HEK293 (cell line): ENCODE measurements at regions of chr21 and their contacts with region 1.

Region 1: DNA sequence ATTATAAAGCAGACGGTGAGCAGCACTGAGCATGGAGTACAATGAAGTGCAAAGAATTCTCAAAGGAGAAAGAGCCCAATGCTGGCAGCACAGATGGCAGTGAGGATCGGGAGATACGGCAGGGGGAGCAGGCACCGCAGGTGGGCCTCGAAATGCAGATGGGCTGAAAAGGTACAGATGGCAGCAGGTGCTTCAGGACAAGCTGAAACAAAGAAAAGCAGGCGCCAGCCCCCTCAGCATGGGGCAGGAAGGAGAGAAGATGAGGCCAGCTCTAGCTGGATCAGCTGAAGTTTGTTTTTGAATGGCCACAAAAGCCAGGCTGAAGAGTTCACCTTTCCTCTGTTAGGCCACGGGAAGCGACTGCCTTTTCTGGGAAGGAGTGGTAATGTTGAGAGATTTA is 7.7 kb downstream of the CFAP298 start:
- H3K4me3 ChIP-seq: no peak overlapping the region
- H3K27ac ChIP-seq: no peak overlapping the region
- H3K4me1 ChIP-seq: no peaks in the 10 kb centered on the region
- CTCF ChIP-seq: no peak

Region 2: GRCh38 chr21:32403201-32403777 is 201.2 kb before region 1 on chr21:
- CTCF ChIA-PET with region 1: interaction called, 209 read pairs
- POLR2A ChIA-PET with region 1: interaction called, 10 read pairs
- H3K4me3 ChIP-seq: no peak overlapping the region
- H3K27ac ChIP-seq: no peak overlapping the region
- H3K4me1 ChIP-seq: no peaks in the 10 kb centered on the region
- CTCF ChIP-seq: peak; percentile 70

Region 3: GRCh38 chr21:32412162-32413014 is 192.1 kb before region 1 on chr21 and contains the start of gene EVA1C:
- CTCF ChIA-PET with region 1: interaction called, 209 read pairs
- POLR2A ChIA-PET with region 1: interaction called, 10 read pairs
- H3K4me3 ChIP-seq: peak within 1 kb of the TSS; percentile 39
- H3K27ac ChIP-seq: peak within 1 kb of the TSS; percentile 67; the same call in 1 of the 2 replicates
- H3K4me1 ChIP-seq: peaks cover 13% of the 10 kb centered on the region
- CTCF ChIP-seq: no peak

Region 4: DNA sequence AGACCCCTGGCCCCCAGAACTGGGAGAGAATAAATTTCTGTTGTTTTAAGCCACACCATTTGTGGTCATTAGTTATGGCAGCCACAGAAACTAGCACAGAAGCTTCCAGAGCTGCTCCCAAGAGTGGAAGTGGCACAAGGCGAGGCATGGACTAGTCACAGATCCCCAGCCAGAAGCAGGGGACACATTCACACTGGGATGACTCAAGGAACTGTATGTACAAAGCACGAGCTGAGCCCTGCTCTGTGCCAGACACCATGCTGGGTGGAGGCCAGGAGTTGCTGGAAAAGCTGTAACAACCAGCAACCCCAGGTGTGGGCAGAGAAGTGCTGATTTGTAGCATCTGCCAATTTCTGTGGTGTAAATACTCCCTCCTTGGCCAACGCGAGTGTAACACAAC is 74.8 kb before region 1 on chr21:
- CTCF ChIA-PET with region 1: no interaction called
- POLR2A ChIA-PET with region 1: no interaction called
- H3K4me3 ChIP-seq: no peak overlapping the region
- H3K27ac ChIP-seq: no peak overlapping the region
- H3K4me1 ChIP-seq: no peaks in the 10 kb centered on the region
- CTCF ChIP-seq: no peak

Region 5: DNA sequence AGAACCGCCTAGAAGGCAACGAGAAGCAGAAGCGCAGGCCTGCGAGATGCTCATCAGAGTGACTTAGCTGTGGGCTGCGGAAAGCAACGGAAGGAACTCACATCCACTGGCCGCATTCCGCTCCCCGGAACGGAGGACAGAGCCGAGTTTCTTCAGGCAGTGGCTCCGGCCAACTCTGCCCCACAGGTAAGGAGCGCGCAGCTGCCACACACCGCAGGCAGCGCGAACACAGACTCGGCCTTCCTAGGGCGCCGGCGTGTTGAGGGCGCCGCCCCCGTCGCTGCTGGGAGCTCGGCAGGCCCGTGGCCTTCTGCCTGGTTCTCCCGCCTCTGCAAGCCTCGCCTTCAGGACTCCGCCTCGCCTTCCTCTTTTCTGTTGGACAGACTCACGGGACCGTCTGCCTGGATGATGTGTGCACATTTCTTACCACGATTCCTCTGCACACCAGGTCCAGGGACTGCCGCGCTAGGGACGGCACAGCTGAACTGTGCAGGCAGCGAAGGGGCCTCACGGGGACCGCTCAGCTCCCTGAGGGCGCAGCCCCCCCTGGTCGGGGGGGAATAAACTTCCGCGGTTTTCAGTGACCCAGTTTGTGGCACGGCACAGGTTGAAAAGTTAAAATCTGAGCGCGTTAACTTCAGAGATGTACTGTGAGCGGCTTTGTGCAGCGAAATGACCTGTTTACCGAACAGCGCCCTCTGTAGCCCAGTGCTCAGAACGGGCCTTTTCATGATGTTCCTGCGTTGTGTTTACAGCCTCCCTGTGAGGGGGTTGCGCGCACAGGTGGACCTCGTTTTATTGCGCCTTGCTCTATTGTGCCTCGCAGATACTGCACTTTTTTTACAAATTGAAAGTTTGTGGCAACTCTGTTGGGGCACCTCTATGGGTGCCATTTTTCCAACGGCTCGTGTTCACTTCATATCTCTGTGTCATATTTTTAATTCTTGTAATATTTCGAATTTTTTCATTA is 34.9 kb before region 1 on chr21:
- CTCF ChIA-PET with region 1: interaction called, 21 read pairs
- POLR2A ChIA-PET with region 1: no interaction called
- H3K4me3 ChIP-seq: peak overlapping the region; percentile 53
- H3K27ac ChIP-seq: peak overlapping the region; percentile 65
- H3K4me1 ChIP-seq: no peaks in the 10 kb centered on the region
- CTCF ChIP-seq: peak; percentile 81

Region 6: GRCh38 chr21:32578107-32578692 is 26.3 kb before region 1 on chr21:
- CTCF ChIA-PET with region 1: interaction called, 23 read pairs
- POLR2A ChIA-PET with region 1: no interaction called
- H3K4me3 ChIP-seq: no peak overlapping the region
- H3K27ac ChIP-seq: no peak overlapping the region
- H3K4me1 ChIP-seq: no peaks in the 10 kb centered on the region
- CTCF ChIP-seq: no peak

Region 7: DNA sequence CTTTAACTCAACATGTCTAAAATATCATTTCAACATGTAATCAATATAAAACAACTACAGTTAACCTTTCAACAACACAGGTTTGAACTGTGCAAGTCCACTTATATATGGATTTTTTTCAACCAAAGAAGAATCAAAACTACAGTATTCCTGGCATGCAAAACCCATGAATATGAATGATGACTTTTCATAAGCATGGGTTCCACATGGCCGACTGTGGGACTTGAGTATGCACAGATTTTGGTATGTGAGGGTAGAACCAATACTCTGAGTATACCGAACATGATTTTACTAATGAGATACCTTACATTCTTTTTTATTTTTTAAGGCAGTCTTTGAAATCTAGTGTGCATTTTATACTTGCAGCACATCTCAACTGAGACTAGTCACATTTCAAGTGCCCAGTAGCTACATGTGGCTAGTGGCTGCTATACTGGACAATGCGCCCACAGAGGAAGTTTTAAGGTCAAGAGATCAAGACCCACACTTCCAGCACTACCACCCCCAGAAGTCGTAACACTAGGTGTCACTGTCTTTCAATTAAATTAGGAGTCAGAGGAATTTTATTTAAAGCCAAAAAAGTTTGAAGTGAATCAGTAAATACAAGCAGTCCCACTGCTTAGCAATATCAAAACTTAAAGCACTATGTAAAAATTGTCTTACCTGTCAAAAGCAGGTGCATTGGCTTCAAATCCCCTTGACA is 83.3 kb after region 1 on chr21:
- CTCF ChIA-PET with region 1: no interaction called
- POLR2A ChIA-PET with region 1: no interaction called
- H3K4me3 ChIP-seq: no peak overlapping the region
- H3K27ac ChIP-seq: no peak overlapping the region
- H3K4me1 ChIP-seq: peaks cover 13% of the 10 kb centered on the region
- CTCF ChIP-seq: no peak